Activated CD4-positive, alpha-beta memory T cell treated with anti-CD3 and anti-CD28 coated beads for 36 hours (primary cell): ENCODE measurements at regions of chr10 and their contacts with region 1.

Region 1: GRCh38 chr10:102167861-102168260 is 15.7 kb downstream of the NOLC1 start:
- DNase-seq: no peak
- H3K4me3 Mint-ChIP-seq: no peak overlapping the region
- H3K27ac Mint-ChIP-seq: no peak overlapping the region
- H3K4me1 Mint-ChIP-seq: peaks cover 5% of the 10 kb centered on the region
- H3K27me3 Mint-ChIP-seq: no peaks in the 10 kb centered on the region

Region 2: DNA sequence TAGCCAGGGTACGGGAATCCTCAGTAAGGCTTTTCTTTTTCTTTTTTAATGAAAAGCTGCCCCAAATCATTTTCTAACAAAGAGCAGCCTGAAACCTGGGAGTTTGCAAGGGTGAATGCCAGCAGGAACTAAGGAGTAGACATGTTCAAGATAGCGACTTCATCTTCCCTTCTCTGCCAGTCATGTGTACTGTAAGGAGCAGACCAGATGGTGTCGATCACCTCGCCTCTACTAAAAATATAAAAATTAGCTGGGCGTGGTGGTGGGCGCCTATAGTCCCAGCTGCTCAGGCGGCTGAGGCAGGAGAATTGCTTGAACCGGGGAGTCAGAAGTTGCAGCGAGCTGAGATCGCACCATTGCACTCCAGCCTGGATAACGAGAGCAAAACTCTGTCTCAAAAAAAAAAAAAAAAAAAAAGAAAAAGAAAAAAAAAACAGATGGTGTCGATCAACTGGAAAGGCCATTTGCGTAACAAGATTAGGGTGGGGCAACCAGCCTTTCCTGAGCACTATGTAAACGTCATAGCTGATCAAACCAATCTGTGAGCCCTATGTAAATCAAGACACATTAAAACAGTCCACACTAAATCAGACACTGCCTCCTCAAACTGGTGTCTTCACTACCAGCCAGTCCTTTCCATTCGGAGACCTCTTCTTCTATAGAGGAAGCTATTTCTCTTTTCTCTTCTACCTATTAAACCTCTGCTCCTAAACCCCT is 18.1 kb after region 1 on chr10:
- CTCF ChIA-PET with region 1: interaction called, 19 read pairs
- POLR2A ChIA-PET with region 1: no interaction called
- intact Hi-C with region 1: no loop called
- DNase-seq: no peak
- H3K4me3 Mint-ChIP-seq: no peak overlapping the region
- H3K27ac Mint-ChIP-seq: no peak overlapping the region
- H3K4me1 Mint-ChIP-seq: peaks cover 14% of the 10 kb centered on the region
- H3K27me3 Mint-ChIP-seq: no peaks in the 10 kb centered on the region

Region 3: DNA sequence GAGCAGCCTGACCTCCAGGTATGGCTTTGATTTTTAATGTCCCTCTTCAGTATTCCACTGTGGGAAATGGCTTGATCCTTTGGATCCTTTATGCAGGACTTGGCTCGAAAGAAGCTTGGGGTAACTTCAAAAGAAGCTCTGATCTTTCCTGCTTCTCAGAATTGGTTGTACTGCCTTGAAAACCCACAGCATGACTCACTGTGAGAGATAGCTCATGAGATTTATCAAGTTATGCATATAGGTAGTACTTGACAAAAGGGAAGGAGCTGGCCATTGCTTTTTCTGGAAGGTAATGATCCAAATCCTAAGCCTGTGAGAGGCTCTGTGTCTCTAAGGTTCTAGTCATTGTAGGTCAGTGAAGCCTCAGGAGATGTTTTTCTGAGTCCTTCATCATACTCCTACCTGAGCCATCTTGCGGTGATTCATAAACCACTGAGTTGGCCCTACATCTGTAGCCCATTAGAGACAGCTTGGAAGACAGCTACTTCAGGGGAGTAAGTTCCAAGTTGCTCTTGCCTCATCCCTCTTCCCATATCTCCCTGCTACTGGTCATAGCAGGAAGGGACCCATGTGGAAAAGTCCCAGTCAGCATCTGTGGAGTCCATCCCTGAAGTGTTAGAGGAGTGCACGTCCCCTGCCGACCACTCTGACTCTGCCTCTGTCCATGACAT is 191.0 kb after region 1 on chr10:
- CTCF ChIA-PET with region 1: interaction called, 76 read pairs
- POLR2A ChIA-PET with region 1: no interaction called
- intact Hi-C with region 1: no loop called
- DNase-seq: no peak
- H3K4me3 Mint-ChIP-seq: no peak overlapping the region
- H3K27ac Mint-ChIP-seq: peak overlapping the region; percentile 24
- H3K4me1 Mint-ChIP-seq: peaks cover 18% of the 10 kb centered on the region
- H3K27me3 Mint-ChIP-seq: no peaks in the 10 kb centered on the region

Region 4: DNA sequence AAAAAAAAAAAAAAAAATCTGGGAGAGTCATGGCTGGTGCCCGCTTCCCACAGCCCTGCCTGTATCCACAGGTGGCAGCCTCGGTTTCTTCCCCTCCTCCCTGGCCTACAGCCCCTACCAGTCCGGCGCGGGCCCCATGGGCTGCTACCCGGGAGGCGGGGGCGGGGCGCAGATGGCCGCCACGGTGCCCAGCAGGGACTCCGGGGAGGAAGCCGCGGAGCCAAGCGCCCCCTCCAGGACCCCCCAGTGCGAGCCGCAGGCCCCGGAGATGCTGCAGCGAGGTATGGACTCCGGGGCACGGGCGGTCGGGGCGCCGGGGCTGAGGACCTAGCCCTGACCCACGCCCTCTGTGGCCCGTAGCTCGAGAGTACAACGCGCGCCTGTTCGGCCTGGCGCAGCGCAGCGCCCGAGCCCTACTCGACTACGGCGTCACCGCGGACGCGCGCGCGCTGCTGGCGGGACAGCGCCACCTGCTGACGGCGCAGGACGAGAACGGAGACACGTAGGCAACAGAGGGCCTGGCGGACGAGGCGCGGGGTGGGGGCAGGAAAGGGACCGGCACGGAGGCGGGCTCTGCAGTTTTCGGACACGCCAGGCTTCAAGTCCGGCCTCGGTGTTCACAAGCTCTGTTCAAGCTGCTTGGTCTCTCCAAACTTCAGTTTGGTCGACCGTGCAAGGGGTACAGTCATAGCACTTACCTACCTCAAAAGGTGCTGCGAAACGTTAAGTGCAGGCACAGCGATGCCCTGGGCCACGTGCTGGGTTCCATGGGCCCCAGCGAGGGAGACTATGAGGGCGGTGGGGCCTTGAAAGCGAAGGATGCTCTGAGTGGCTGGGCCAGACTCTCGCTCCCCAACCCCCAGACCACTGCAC is 231.6 kb after region 1 on chr10:
- CTCF ChIA-PET with region 1: interaction called, 11 read pairs
- POLR2A ChIA-PET with region 1: no interaction called
- intact Hi-C with region 1: loop called (anchors 2 kb)
- DNase-seq: peak; percentile 92
- H3K4me3 Mint-ChIP-seq: peak overlapping the region; percentile 68
- H3K27ac Mint-ChIP-seq: peak overlapping the region; percentile 74
- H3K4me1 Mint-ChIP-seq: peaks cover 40% of the 10 kb centered on the region
- H3K27me3 Mint-ChIP-seq: no peaks in the 10 kb centered on the region